CD14-positive monocyte (primary cell): ENCODE measurements at regions of chr7 and their contacts with region 1.

Region 1: GRCh38 chr7:119392-120163 is 72.8 kb upstream of the FAM20C start:
- DNase-seq: peak; percentile 74 to 86 (median 83)
- H3K4me3 ChIP-seq: peak overlapping the region in 2 of 3 experiments; percentile 9 to 52
- H3K4me3 Mint-ChIP-seq: peak overlapping the region; percentile 24 to 63
- H3K27ac ChIP-seq: peak overlapping the region; percentile 94 to 95
- H3K27ac Mint-ChIP-seq: peak overlapping the region; percentile 87 to 97 (median 93)
- H3K4me1 ChIP-seq: peaks cover 67 to 87% of the 10 kb centered on the region in 2 donors
- H3K4me1 Mint-ChIP-seq: peaks cover 76% of the 10 kb centered on the region
- H3K27me3 ChIP-seq: no peaks in the 10 kb centered on the region
- H3K27me3 Mint-ChIP-seq: peaks cover 0 to 1% (median under 1%) of the 10 kb centered on the region in 3 donors
- CTCF ChIP-seq: no peak

Region 2: GRCh38 chr7:46123-46829 is 73.3 kb before region 1 on chr7:
- intact Hi-C with region 1: no loop called
- DNase-seq: no peak
- H3K4me3 ChIP-seq: no peak overlapping the region
- H3K4me3 Mint-ChIP-seq: no peak overlapping the region
- H3K27ac ChIP-seq: no peak overlapping the region
- H3K27ac Mint-ChIP-seq: peak overlapping the region in 1 of 7 donors; percentile 34
- H3K4me1 ChIP-seq: peaks cover 14 to 15% of the 10 kb centered on the region in 2 donors
- H3K4me1 Mint-ChIP-seq: peaks cover 32% of the 10 kb centered on the region
- H3K27me3 ChIP-seq: no peaks in the 10 kb centered on the region
- H3K27me3 Mint-ChIP-seq: peaks cover 0 to 1% (median 0%) of the 10 kb centered on the region in 3 donors
- CTCF ChIP-seq: no peak

Region 3: GRCh38 chr7:89232-90019 is 30.2 kb before region 1 on chr7:
- intact Hi-C with region 1: loop called in 1 of 2 experiments (anchors 2 kb)
- DNase-seq: peak; percentile 80 to 95 (median 85)
- H3K4me3 ChIP-seq: no peak overlapping the region
- H3K4me3 Mint-ChIP-seq: peak overlapping the region in 1 of 2 donors; percentile 59
- H3K27ac ChIP-seq: peak overlapping the region; percentile 9 to 51
- H3K27ac Mint-ChIP-seq: peak overlapping the region; percentile 59 to 87 (median 82)
- H3K4me1 ChIP-seq: peaks cover 37 to 52% of the 10 kb centered on the region in 2 donors
- H3K4me1 Mint-ChIP-seq: peaks cover 44% of the 10 kb centered on the region
- H3K27me3 ChIP-seq: no peaks in the 10 kb centered on the region
- H3K27me3 Mint-ChIP-seq: peaks cover 0 to 6% (median 3%) of the 10 kb centered on the region in 3 donors
- CTCF ChIP-seq: no peak

Region 4: DNA sequence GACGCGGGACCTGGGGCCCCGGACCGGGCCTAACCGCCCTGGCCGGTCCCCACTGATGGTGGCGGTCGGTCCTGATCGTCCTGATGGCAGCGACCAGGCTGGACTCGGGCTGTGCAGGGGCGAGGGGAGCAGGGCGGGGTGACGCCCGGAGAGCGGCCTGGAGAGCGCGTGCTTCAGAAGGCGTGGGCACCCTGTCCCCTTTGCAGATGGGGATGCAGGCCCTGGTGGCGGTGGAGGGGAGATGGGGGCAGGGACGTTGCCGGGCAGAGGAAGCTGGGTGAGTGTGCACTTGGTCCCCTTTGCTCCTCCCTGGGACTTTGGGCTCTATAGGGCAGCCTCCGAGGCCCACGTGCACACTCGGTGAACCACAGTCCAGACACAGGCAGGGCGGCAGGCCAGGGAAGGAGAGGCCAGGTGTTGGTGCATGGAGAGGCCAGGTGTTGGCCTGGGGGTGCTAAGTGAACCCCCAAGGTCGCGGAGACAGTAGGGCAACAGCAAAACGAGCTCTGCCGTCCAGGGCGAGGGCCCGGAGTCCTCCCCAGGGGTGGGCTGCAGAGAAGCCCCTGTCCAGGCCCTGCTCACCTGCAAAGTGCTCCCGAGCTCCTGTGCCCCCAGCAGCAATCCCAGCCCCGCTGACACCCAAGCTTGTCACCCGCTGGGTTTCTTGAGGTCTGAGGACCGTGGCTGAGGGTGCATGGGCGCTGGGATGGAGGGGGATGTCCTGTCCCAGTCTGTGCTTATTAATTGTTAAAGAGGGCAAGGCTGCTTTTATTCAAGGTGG is 30.5 kb after region 1 on chr7:
- intact Hi-C with region 1: loop called in 1 of 2 experiments (anchors 1 kb)
- DNase-seq: peak; percentile 50 to 84 (median 74)
- H3K4me3 ChIP-seq: peak overlapping the region; percentile 36 to 82 (median 50)
- H3K4me3 Mint-ChIP-seq: peak overlapping the region; percentile 80 to 89
- H3K27ac ChIP-seq: peak overlapping the region; percentile 94 to 96
- H3K27ac Mint-ChIP-seq: peak overlapping the region; percentile 97 to 100 (median 98)
- H3K4me1 ChIP-seq: peaks cover 32 to 37% of the 10 kb centered on the region in 2 donors
- H3K4me1 Mint-ChIP-seq: peaks cover 36% of the 10 kb centered on the region
- H3K27me3 ChIP-seq: no peaks in the 10 kb centered on the region
- H3K27me3 Mint-ChIP-seq: no peaks in the 10 kb centered on the region
- CTCF ChIP-seq: no peak

Region 5: DNA sequence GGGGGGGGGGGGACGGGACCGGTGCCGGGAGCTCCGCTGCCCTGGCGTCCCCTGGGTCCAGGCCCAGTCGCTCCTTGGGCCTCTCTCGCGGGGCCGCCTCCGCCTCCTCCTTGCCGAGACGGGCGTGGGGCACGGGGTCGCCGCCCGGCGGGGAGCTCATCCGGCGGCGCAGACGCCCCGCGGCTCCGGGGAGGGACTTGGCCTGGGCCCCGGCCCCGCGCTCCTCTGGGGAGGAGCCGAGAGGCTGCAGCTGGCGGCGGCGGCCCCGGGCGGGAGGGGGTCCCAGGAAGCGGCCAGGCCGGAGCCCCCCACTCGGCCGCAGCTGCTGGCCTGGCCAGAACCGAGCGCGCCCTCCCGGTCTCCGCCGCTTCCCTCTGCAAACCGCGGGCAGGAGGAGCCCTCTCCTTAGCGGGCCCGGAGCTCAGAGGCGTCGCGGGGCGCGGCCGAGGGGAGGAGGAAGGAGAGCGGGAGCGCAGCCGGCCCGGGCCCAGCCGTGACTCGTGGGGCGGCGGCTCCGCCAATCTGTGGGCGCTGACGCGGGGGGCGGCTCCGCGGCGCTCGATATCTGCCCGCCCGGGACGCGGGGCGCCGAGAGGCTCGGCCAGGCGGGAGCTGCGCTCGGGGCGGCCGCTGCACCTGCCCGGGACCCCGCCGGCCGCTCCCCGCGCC is 72.5 kb after region 1 on chr7 and contains the start of gene FAM20C:
- intact Hi-C with region 1: loop called in 1 of 2 experiments (anchors 5 kb)
- DNase-seq: peak; percentile 82 to 85 (median 82)
- H3K4me3 ChIP-seq: peak within 1 kb of the TSS; percentile 56 to 91 (median 86)
- H3K4me3 Mint-ChIP-seq: peak within 1 kb of the TSS; percentile 97
- H3K27ac ChIP-seq: peak within 1 kb of the TSS in 1 of 2 donors; percentile 68
- H3K27ac Mint-ChIP-seq: peak within 1 kb of the TSS in 6 of 7 donors; percentile 45 to 96 (median 84)
- H3K4me1 ChIP-seq: peaks cover 24 to 43% of the 10 kb centered on the region in 2 donors
- H3K4me1 Mint-ChIP-seq: peaks cover 40% of the 10 kb centered on the region
- H3K27me3 ChIP-seq: peaks cover 0 to 18% of the 10 kb centered on the region in 2 donors
- H3K27me3 Mint-ChIP-seq: peaks cover 10 to 35% (median 20%) of the 10 kb centered on the region in 3 donors
- CTCF ChIP-seq: no peak
- polyA plus RNA-seq, gene FAM20C: 1.2 to 32.2 (median 1.5) TPM

Region 6: GRCh38 chr7:322111-322671 is 202.6 kb after region 1 on chr7:
- intact Hi-C with region 1: no loop called
- DNase-seq: peak; percentile 27 to 55 (median 39)
- H3K4me3 ChIP-seq: no peak overlapping the region
- H3K4me3 Mint-ChIP-seq: peak overlapping the region in 1 of 2 donors; percentile 15
- H3K27ac ChIP-seq: no peak overlapping the region
- H3K27ac Mint-ChIP-seq: no peak overlapping the region
- H3K4me1 ChIP-seq: peaks cover 0 to 8% of the 10 kb centered on the region in 2 donors
- H3K4me1 Mint-ChIP-seq: peaks cover 7% of the 10 kb centered on the region
- H3K27me3 ChIP-seq: no peaks in the 10 kb centered on the region
- H3K27me3 Mint-ChIP-seq: peaks cover 8 to 21% (median 16%) of the 10 kb centered on the region in 3 donors
- CTCF ChIP-seq: peak; percentile 99

Region 7: DNA sequence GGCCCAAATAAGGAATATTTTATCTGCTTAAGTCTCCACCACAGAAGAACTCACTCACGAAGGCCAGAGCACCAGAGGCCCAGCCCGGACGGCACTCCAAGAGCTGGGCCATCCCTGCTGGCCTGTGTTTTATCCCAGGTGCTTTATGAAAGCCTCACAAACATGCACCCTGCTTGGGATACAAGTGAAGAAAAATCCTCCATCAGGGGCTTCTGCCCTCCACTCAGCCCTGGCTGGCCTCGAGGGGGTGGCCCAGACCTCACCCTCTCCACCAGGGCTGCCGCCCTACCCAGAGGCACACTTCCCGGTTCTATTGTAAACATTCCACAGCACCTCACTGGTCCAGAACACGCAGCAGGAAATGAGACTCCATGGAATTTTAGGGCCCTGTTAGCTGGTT is 587.1 kb after region 1 on chr7:
- intact Hi-C with region 1: no loop called
- DNase-seq: no peak
- H3K4me3 ChIP-seq: no peak overlapping the region
- H3K4me3 Mint-ChIP-seq: no peak overlapping the region
- H3K27ac ChIP-seq: no peak overlapping the region
- H3K27ac Mint-ChIP-seq: no peak overlapping the region
- H3K4me1 ChIP-seq: no peaks in the 10 kb centered on the region
- H3K4me1 Mint-ChIP-seq: no peaks in the 10 kb centered on the region
- H3K27me3 ChIP-seq: peaks cover 0 to 8% of the 10 kb centered on the region in 2 donors
- H3K27me3 Mint-ChIP-seq: peaks cover 6 to 15% (median 15%) of the 10 kb centered on the region in 3 donors
- CTCF ChIP-seq: no peak